H1 (cell line): ENCODE measurements at regions of chr1 and their contacts with region 1.

Region 1: GRCh38 chr1:28248283-28249012 is 10.9 kb upstream of the SESN2 start:
- DNase-seq: peak in 1 of 2 experiments; percentile 88
- H3K4me3 ChIP-seq: peak overlapping the region in 2 of 4 experiments; percentile 23 to 31; a peak in 3 of 8 replicates
- H3K27ac ChIP-seq: peak overlapping the region; percentile 18; the same call in 1 of the 2 replicates
- H3K4me1 ChIP-seq: peaks cover 6 to 19% (median 10%) of the 10 kb centered on the region in 4 experiments; a peak in 6 of 7 replicates
- H3K27me3 ChIP-seq: no peaks in the 10 kb centered on the region
- CTCF ChIP-seq: peak; percentile 69 to 91 (median 71)
- EP300 ChIP-seq: no peak
- POLR2A ChIP-seq: peak in 1 of 2 experiments; percentile 22; a peak in 1 of 3 replicates
- RAD21 ChIP-seq: peak; percentile 82 to 84

Region 2: GRCh38 chr1:28213315-28213714 is 35.1 kb before region 1 on chr1:
- CTCF ChIA-PET with region 1: no interaction called
- POLR2A ChIA-PET with region 1: no interaction called
- DNase-seq: no peak
- H3K4me3 ChIP-seq: no peak overlapping the region
- H3K27ac ChIP-seq: no peak overlapping the region
- H3K4me1 ChIP-seq: no peaks in the 10 kb centered on the region
- H3K27me3 ChIP-seq: no peaks in the 10 kb centered on the region
- CTCF ChIP-seq: no peak
- EP300 ChIP-seq: no peak
- POLR2A ChIP-seq: no peak
- RAD21 ChIP-seq: no peak

Region 3: DNA sequence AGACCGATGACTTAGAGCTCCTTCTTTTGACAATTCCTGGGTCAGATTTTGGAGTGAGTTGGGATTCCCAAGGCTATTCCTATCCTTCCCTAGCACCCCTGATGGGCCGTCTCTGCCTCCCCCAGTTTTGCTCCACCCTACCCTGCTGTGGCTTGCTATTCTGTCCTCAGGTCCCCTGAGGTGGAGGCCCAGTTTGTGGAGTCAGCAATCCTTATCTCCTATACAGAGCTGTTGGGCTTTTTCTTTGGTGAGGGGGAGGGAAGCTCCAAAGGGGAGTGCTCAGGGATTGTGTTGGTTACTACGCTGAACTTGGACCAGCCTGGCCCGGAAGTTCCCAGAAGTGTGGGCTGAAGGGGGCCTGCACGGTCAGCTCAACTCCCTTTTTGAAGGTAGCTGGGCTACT is 18.5 kb after region 1 on chr1:
- CTCF ChIA-PET with region 1: interaction called, 61 read pairs
- POLR2A ChIA-PET with region 1: interaction called, 296 read pairs
- DNase-seq: no peak
- H3K4me3 ChIP-seq: 0 out of 8 replicates have a peak overlapping the region, but pooled peaks of 1 of the 4 experiments have one; percentile 2
- H3K27ac ChIP-seq: no peak overlapping the region
- H3K4me1 ChIP-seq: peaks cover 5 to 20% (median 16%) of the 10 kb centered on the region in 4 experiments; a peak in 5 of 7 replicates
- H3K27me3 ChIP-seq: no peaks in the 10 kb centered on the region
- CTCF ChIP-seq: no peak
- EP300 ChIP-seq: no peak
- POLR2A ChIP-seq: no peak
- RAD21 ChIP-seq: no peak

Region 4: GRCh38 chr1:28296401-28297261 is 48.2 kb after region 1 on chr1:
- CTCF ChIA-PET with region 1: interaction called, 11 read pairs
- POLR2A ChIA-PET with region 1: interaction called, 3 read pairs
- DNase-seq: peak; percentile 46 to 66
- H3K4me3 ChIP-seq: peak overlapping the region in 1 of 4 experiments; percentile 36; a peak in 2 of 8 replicates
- H3K27ac ChIP-seq: 0 out of 2 replicates have a peak overlapping the region, but pooled peaks have one; percentile 29
- H3K4me1 ChIP-seq: peaks cover 4 to 8% (median 6%) of the 10 kb centered on the region in 4 experiments
- H3K27me3 ChIP-seq: no peaks in the 10 kb centered on the region
- CTCF ChIP-seq: no peak
- EP300 ChIP-seq: peak in 1 of 2 experiments; percentile 87; a peak in 2 of 3 replicates
- POLR2A ChIP-seq: no peak; a peak in 1 of 3 replicates
- RAD21 ChIP-seq: no peak; a peak in 1 of 4 replicates

Region 5: DNA sequence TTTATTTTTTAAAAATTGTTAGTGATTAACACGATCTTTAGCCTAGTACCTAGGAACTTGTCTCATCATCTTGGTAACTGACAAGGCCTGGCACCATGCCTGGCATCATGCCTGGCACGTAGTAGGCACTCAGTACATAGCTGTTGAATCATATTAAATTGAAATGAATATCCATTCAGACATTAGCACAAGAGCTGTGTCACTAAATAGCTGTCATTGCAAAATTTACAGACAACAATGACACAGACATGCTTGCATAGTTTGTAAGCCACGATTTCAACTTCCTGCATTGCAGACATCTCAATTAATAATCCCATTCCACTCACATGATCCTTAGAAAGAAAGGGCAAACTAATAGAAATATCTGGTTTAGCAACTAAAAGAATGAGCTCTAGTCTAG is 105.7 kb after region 1 on chr1:
- CTCF ChIA-PET with region 1: interaction called, 13 read pairs
- POLR2A ChIA-PET with region 1: no interaction called
- DNase-seq: no peak
- H3K4me3 ChIP-seq: no peak overlapping the region
- H3K27ac ChIP-seq: no peak overlapping the region
- H3K4me1 ChIP-seq: peaks cover 0 to under 1% (median 0%) of the 10 kb centered on the region in 4 experiments; a peak in 1 of 7 replicates
- H3K27me3 ChIP-seq: no peaks in the 10 kb centered on the region
- CTCF ChIP-seq: no peak
- EP300 ChIP-seq: no peak
- POLR2A ChIP-seq: no peak
- RAD21 ChIP-seq: no peak

Region 6: GRCh38 chr1:28510665-28511440 is 262.4 kb after region 1 on chr1:
- CTCF ChIA-PET with region 1: interaction called, 3 read pairs
- POLR2A ChIA-PET with region 1: interaction called, 98 read pairs
- DNase-seq: no peak
- H3K4me3 ChIP-seq: no peak overlapping the region
- H3K27ac ChIP-seq: peak overlapping the region; percentile 95
- H3K4me1 ChIP-seq: peaks cover 5 to 17% (median 9%) of the 10 kb centered on the region in 4 experiments; a peak in 5 of 7 replicates
- H3K27me3 ChIP-seq: no peaks in the 10 kb centered on the region
- CTCF ChIP-seq: no peak
- EP300 ChIP-seq: no peak
- POLR2A ChIP-seq: peak; percentile 68 to 100
- RAD21 ChIP-seq: no peak